Motor neuron (in vitro differentiated cells): ENCODE measurements at regions of chr10 and their contacts with region 1.

Region 1: DNA sequence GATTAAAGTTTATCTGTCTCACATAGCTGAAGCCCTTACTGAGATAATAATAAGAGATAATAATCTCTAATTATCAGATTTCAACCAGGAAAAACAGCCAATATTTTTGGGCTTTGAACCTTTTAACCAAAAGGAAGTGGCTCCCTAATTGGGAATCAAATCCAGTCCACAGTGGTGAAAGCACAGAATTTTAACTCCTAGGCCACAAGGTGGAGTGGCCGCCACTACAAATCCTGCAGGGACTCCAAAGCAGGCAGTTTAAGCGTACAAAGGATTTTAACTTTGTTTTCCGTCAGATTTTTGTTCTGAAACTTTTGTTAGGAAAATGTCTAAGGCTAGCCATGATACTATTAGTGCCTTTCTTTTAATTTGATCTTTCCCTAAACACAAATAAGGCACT is 99.6 kb upstream of the CCNY start:
- ATAC-seq: no peak
- H3K4me3 ChIP-seq: no peak overlapping the region
- H3K27ac ChIP-seq: no peak overlapping the region
- H3K4me1 ChIP-seq: no peaks in the 10 kb centered on the region

Region 2: DNA sequence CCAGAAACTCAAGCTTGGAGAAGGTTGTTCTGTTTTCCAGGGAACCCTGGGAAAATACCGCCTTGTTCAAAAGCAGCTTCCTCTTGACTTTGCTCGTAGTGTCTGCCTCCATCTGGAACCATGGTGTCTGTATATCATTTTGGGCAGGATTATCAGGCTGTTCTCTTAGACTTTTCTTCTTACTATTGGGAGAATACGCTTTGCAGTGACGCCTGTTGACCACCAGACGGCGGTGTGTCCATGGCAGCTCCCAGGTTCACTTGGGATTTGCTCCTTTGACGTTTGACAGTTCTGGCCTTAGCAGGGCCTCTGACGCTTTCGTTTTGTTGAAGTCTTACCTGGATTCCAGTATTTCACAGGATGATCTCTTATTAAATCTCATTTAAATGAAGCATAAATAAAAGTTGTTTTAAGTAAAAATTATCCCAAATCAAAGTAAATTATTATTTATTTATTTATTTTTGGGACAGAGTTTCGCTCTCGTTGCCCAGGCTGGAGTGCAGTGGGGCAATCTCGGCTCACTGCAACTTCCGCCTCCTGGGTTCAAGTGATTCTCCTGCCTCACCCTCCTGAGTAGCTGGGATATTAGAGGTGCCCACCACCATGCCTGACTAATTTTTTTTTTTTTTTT is 326.6 kb after region 1 on chr10:
- in situ Hi-C with region 1: loop called in 1 of 9 experiments (anchors 25 kb)
- ATAC-seq: peak in 7 of 8 experiments; percentile 12 to 79 (median 27)
- H3K4me3 ChIP-seq: no peak overlapping the region
- H3K27ac ChIP-seq: no peak overlapping the region
- H3K4me1 ChIP-seq: no peaks in the 10 kb centered on the region

Region 3: DNA sequence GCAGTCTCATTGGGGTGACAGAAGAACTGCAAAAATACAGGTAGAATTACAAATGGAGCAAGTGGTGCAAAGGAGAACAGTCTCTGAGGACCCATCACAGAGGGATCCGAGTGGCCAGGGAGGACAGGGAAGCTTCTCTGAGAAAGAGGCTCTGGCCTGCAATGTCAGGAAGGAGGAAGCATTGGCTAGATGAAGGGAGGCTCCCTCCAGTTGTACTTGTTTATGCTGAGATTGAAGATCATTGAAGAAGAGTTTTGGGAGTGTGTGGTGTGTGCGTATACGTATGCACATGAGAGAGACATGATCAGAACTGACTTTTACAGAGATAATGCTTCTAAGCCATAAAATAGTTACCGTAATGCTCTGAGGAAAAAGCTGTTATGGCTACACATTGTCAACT is 680.1 kb after region 1 on chr10:
- in situ Hi-C with region 1: no loop called
- ATAC-seq: peak in 2 of 8 experiments; percentile 50 to 52
- H3K4me3 ChIP-seq: no peak overlapping the region
- H3K27ac ChIP-seq: no peak overlapping the region
- H3K4me1 ChIP-seq: no peaks in the 10 kb centered on the region